Activated CD8-positive, alpha-beta T cell treated with anti-CD3 and anti-CD28 coated beads for 36 hours (primary cell): ENCODE measurements at regions of chr6 and their contacts with region 1.

Region 1: GRCh38 chr6:70884074-70884983 is 72.5 kb downstream of the B3GAT2 start:
- DNase-seq: peak; percentile 66
- ATAC-seq: peak; percentile 94
- H3K4me3 Mint-ChIP-seq: no peak overlapping the region
- H3K27ac Mint-ChIP-seq: no peak overlapping the region
- H3K4me1 Mint-ChIP-seq: no peaks in the 10 kb centered on the region
- H3K27me3 Mint-ChIP-seq: peaks cover 8% of the 10 kb centered on the region
- CTCF ChIP-seq: peak; percentile 88

Region 2: GRCh38 chr6:70310063-70310694 is 574.1 kb before region 1 on chr6:
- CTCF ChIA-PET with region 1: interaction called, 13 read pairs
- POLR2A ChIA-PET with region 1: no interaction called
- intact Hi-C with region 1: loop called (anchors 10 kb)
- DNase-seq: no peak
- ATAC-seq: no peak
- H3K4me3 Mint-ChIP-seq: no peak overlapping the region
- H3K27ac Mint-ChIP-seq: no peak overlapping the region
- H3K4me1 Mint-ChIP-seq: peaks cover 7% of the 10 kb centered on the region
- H3K27me3 Mint-ChIP-seq: peaks cover 22% of the 10 kb centered on the region
- CTCF ChIP-seq: peak; percentile 42

Region 3: GRCh38 chr6:70520575-70520974 is 363.8 kb before region 1 on chr6:
- CTCF ChIA-PET with region 1: interaction called, 23 read pairs
- POLR2A ChIA-PET with region 1: no interaction called
- intact Hi-C with region 1: loop called (anchors 2 kb)
- DNase-seq: no peak
- ATAC-seq: no peak
- H3K4me3 Mint-ChIP-seq: no peak overlapping the region
- H3K27ac Mint-ChIP-seq: no peak overlapping the region
- H3K4me1 Mint-ChIP-seq: peaks cover 4% of the 10 kb centered on the region
- H3K27me3 Mint-ChIP-seq: no peaks in the 10 kb centered on the region
- CTCF ChIP-seq: no peak

Region 4: DNA sequence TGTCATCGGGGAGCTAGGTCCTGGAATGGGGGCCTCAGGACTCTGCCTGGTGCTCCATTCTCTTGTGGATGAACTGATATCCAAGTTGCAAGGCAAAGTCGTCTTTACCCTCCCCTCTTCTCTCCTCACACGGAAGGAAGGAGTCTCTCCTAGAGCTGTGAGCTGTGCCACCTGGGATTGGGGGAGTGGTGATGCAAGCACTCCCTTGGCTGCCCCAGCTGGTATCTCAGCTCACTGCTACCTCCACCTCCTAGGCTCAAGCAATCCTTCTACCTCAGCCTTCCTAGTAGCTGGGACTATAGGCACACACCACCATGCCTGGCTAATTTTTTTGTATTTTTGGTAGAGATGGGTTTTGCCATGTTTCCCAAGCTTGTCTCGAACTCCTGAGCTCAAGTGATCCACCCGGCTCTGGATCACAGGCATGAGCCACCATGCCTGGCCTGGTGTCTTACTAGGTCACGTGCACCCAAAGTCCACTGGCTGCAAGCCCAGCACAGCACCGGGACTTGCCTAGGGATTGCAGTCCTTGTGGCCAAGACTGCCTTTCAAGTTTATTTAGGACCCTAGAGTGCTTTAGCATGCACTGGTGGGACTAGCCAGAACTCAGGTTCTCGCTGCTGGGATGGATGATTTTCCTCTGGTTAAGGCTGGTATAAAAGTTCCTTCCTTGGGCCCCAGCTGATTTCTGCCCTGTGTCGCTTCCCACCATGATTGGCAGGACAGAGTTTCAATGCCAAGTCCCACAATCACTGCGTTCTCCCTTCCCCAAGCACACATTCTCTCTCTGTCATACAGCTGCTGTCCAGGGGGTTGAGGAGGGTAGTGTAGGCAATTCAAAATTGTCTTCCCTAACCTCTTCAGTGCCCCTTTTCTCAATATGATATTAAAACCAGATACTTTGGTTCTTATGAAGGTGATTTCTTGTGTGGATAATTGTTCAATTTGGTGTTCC is 183.1 kb before region 1 on chr6:
- CTCF ChIA-PET with region 1: interaction called, 52 read pairs
- POLR2A ChIA-PET with region 1: no interaction called
- intact Hi-C with region 1: loop called (anchors 1 kb)
- DNase-seq: no peak
- ATAC-seq: no peak
- H3K4me3 Mint-ChIP-seq: no peak overlapping the region
- H3K27ac Mint-ChIP-seq: no peak overlapping the region
- H3K4me1 Mint-ChIP-seq: peaks cover 24% of the 10 kb centered on the region
- H3K27me3 Mint-ChIP-seq: no peaks in the 10 kb centered on the region
- CTCF ChIP-seq: no peak

Region 5: GRCh38 chr6:70706491-70707123 is 177.7 kb before region 1 on chr6:
- CTCF ChIA-PET with region 1: interaction called, 126 read pairs
- POLR2A ChIA-PET with region 1: no interaction called
- intact Hi-C with region 1: loop called (anchors 1 kb)
- DNase-seq: no peak
- ATAC-seq: no peak
- H3K4me3 Mint-ChIP-seq: no peak overlapping the region
- H3K27ac Mint-ChIP-seq: no peak overlapping the region
- H3K4me1 Mint-ChIP-seq: peaks cover 29% of the 10 kb centered on the region
- H3K27me3 Mint-ChIP-seq: no peaks in the 10 kb centered on the region
- CTCF ChIP-seq: peak; percentile 93

Region 6: GRCh38 chr6:70860045-70860444 is 24.3 kb before region 1 on chr6:
- CTCF ChIA-PET with region 1: interaction called, 10 read pairs
- POLR2A ChIA-PET with region 1: no interaction called
- intact Hi-C with region 1: no loop called
- DNase-seq: no peak
- ATAC-seq: no peak
- H3K4me3 Mint-ChIP-seq: no peak overlapping the region
- H3K27ac Mint-ChIP-seq: no peak overlapping the region
- H3K4me1 Mint-ChIP-seq: no peaks in the 10 kb centered on the region
- H3K27me3 Mint-ChIP-seq: no peaks in the 10 kb centered on the region
- CTCF ChIP-seq: no peak

Region 7: DNA sequence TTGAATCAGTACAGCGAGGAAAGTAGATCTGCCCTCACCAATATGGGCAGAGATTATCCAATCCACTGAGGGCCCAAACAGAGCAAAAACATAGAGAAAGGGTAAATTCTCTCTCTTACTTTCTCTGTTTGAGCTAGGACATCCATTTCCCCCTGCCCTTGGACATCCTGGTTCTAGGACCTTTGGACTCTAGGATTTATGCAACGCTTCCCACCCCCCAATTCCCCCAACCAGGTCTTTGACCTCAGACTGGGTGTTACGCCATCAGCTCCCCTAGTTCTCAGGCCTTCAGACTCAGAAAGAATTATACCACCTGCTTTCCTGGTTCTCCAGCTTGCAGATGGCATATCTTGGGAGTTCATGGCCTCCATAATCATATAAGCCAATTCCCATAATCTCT is 82.7 kb after region 1 on chr6:
- CTCF ChIA-PET with region 1: no interaction called
- POLR2A ChIA-PET with region 1: no interaction called
- intact Hi-C with region 1: no loop called
- DNase-seq: no peak
- ATAC-seq: no peak
- H3K4me3 Mint-ChIP-seq: no peak overlapping the region
- H3K27ac Mint-ChIP-seq: no peak overlapping the region
- H3K4me1 Mint-ChIP-seq: no peaks in the 10 kb centered on the region
- H3K27me3 Mint-ChIP-seq: peaks cover 5% of the 10 kb centered on the region
- CTCF ChIP-seq: no peak

Region 8: GRCh38 chr6:71012866-71013469 is 128.6 kb after region 1 on chr6:
- CTCF ChIA-PET with region 1: interaction called, 3 read pairs
- POLR2A ChIA-PET with region 1: no interaction called
- intact Hi-C with region 1: loop called (anchors 10 kb)
- DNase-seq: peak; percentile 15
- ATAC-seq: peak; percentile 51
- H3K4me3 Mint-ChIP-seq: no peak overlapping the region
- H3K27ac Mint-ChIP-seq: no peak overlapping the region
- H3K4me1 Mint-ChIP-seq: no peaks in the 10 kb centered on the region
- H3K27me3 Mint-ChIP-seq: peaks cover 10% of the 10 kb centered on the region
- CTCF ChIP-seq: peak; percentile 76